Caco-2 (cell line): ENCODE measurements at regions of chr11 and their contacts with region 1.

Region 1: DNA sequence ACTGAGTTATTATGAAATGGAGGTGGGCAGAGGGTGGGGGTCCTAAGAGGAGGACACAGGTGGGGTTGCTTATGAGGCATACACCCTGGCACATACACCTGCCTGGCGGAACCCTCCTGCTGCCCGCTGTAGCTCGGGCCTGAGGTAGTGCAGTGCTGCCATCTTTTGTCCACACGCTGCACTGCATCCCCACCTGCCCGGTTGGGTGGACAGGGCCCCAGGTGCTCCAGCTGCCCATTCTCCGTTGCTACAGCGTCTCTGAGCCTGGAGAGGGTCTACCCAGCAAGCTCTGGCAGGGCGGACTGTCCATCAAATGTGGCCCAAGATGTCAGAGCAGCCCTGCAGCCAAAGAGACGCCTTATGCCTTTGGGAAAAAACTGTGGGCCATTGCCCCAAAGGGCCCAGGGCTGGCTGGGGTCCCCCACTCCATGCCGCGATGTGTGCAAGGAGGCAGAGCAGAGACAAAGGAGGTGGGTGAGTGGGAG is 131.2 kb downstream of the BUD13 start:
- DNase-seq: peak; percentile 77 to 88
- H3K4me3 ChIP-seq: no peak overlapping the region
- H3K4me3 Mint-ChIP-seq: no peak overlapping the region
- H3K27ac Mint-ChIP-seq: no peak overlapping the region
- H3K4me1 ChIP-seq: no peaks in the 10 kb centered on the region
- H3K4me1 Mint-ChIP-seq: no peaks in the 10 kb centered on the region
- H3K27me3 ChIP-seq: no peaks in the 10 kb centered on the region
- H3K27me3 Mint-ChIP-seq: peaks cover 6% of the 10 kb centered on the region
- CTCF ChIP-seq: peak; percentile 97 to 98

Region 2: DNA sequence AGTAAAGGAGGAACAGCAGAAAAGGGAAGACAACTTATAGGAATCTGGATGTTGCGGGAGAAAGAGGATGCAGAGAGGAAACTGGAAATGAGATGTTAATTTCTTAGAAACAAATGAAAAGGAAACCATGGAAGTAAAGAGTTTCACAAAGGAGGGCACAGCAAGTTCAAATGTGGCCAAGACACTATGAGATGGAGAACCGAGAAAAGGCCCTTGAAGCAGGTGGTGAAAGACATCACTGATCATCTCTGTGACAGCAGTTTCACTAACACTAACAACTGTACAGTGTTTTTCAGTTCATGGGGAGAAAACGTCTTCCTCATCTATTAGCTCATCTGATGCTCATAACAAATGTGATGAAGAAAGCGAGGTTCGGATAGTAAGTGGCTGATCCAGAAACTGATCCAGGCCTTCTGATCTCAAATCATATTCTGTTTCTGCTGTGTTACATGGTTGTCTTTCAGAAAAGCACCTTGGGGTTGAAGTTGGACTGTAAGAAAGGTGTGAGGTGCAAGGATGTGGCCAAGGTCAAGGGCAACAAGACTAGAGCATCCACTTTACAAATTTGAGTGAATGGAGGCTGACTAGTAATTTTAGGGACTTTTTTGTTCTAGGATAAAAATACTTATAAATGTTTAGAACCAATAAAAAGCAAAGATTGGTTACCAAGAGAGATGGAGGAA is 645.3 kb before region 1 on chr11:
- CTCF ChIA-PET with region 1: no interaction called
- POLR2A ChIA-PET with region 1: no interaction called
- intact Hi-C with region 1: no loop called
- DNase-seq: no peak
- H3K4me3 ChIP-seq: no peak overlapping the region
- H3K4me3 Mint-ChIP-seq: no peak overlapping the region
- H3K27ac Mint-ChIP-seq: no peak overlapping the region
- H3K4me1 ChIP-seq: no peaks in the 10 kb centered on the region
- H3K4me1 Mint-ChIP-seq: no peaks in the 10 kb centered on the region
- H3K27me3 ChIP-seq: no peaks in the 10 kb centered on the region
- H3K27me3 Mint-ChIP-seq: peaks cover 30% of the 10 kb centered on the region
- CTCF ChIP-seq: no peak

Region 3: DNA sequence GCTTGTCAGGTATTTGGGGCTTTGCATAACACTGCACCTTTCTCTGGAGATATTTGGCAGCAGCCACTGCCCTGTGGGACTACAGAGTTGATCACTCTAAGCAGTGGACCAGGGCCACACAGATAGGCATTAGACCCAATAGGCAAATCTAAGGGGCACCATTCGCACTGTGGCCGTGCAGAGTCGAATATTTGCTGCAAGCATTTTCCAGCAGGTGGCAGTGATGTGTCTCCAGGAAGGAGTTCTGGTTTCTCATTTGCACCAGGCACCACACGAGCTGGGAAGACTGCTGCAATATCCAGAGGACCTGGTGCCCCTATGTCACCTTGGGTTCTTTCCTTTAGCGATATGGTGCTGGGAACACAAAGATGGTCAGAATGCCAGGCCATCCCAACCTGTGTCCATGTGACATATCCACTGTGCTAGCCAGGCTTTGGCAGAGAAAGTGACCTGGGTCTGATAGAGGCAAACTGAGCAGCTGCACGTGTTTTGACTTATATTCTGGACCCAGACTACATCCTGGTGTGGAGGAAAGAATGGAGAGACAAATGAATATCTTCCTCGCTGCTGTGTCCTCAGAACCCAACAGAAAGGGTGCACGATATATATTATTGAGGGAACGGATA is 187.5 kb before region 1 on chr11:
- CTCF ChIA-PET with region 1: interaction called, 8 read pairs
- POLR2A ChIA-PET with region 1: no interaction called
- intact Hi-C with region 1: loop called (anchors 1 kb)
- DNase-seq: peak; percentile 61 to 69
- H3K4me3 ChIP-seq: no peak overlapping the region
- H3K4me3 Mint-ChIP-seq: no peak overlapping the region
- H3K27ac Mint-ChIP-seq: no peak overlapping the region
- H3K4me1 ChIP-seq: peaks cover 14% of the 10 kb centered on the region
- H3K4me1 Mint-ChIP-seq: peaks cover 14% of the 10 kb centered on the region
- H3K27me3 ChIP-seq: no peaks in the 10 kb centered on the region
- H3K27me3 Mint-ChIP-seq: no peaks in the 10 kb centered on the region
- CTCF ChIP-seq: peak; percentile 77 to 83

Region 4: GRCh38 chr11:116513894-116514293 is 127.7 kb before region 1 on chr11:
- CTCF ChIA-PET with region 1: interaction called, 16 read pairs
- POLR2A ChIA-PET with region 1: no interaction called
- intact Hi-C with region 1: loop called (anchors 1 kb)
- DNase-seq: peak; percentile 60 to 69
- H3K4me3 ChIP-seq: no peak overlapping the region
- H3K4me3 Mint-ChIP-seq: no peak overlapping the region
- H3K27ac Mint-ChIP-seq: no peak overlapping the region
- H3K4me1 ChIP-seq: no peaks in the 10 kb centered on the region
- H3K4me1 Mint-ChIP-seq: no peaks in the 10 kb centered on the region
- H3K27me3 ChIP-seq: no peaks in the 10 kb centered on the region; the same call in 1 of the 2 replicates
- H3K27me3 Mint-ChIP-seq: peaks cover 28% of the 10 kb centered on the region
- CTCF ChIP-seq: peak; percentile 51 to 64

Region 5: DNA sequence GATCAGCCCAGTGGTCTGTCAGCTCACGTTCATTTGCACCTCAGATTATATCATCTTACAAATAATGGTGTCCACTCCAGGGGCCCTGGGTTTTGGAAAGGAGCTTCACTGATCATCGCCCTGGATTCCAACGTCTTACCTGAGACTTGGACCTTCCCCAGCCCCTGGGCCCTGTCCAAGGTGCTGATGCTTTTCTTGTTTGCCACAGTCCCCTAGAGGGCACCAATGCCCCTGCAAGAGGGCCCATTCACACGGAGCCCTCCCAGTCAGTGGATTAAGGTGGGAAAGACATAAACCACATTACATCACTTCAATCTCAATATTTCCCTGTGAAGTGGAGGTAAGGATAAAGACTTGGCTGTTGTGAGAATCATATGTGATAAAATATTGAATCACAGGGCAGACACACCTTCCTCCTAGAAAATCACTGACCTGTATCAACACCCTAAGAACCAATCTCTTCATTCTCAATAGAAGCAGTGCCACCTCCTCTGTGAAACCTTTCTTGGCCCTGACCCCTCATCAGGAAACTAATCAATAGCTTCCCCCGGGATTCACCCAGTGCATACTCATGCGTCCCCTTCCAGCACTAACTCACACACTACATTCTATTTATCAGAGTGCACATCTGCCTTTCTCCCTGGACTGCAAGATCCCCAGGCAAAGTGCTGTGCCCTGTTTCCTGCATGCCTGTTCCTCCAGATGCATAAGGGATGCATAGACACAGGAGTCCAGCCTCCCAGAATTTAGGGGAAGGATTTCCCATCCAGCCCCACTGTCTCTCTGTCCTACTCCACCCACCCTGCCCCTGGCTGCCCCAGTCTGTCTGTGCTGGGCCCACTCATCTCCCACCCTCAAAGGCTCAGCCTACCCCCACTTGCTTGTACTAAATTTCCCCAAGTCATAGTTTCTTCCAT is 35.8 kb before region 1 on chr11:
- CTCF ChIA-PET with region 1: no interaction called
- POLR2A ChIA-PET with region 1: no interaction called
- intact Hi-C with region 1: loop called (anchors 1 kb)
- DNase-seq: peak; percentile 88 to 93
- H3K4me3 ChIP-seq: no peak overlapping the region
- H3K4me3 Mint-ChIP-seq: no peak overlapping the region
- H3K27ac Mint-ChIP-seq: no peak overlapping the region
- H3K4me1 ChIP-seq: peaks cover 8% of the 10 kb centered on the region; the same call in 1 of the 2 replicates
- H3K4me1 Mint-ChIP-seq: no peaks in the 10 kb centered on the region
- H3K27me3 ChIP-seq: 0 out of 2 replicates have a peak, but pooled peaks cover under 1% of the 10 kb centered on the region
- H3K27me3 Mint-ChIP-seq: peaks cover 7% of the 10 kb centered on the region
- CTCF ChIP-seq: peak; percentile 86 to 93

Region 6: GRCh38 chr11:116691771-116692177 is 50.2 kb after region 1 on chr11:
- CTCF ChIA-PET with region 1: interaction called, 8 read pairs
- POLR2A ChIA-PET with region 1: no interaction called
- intact Hi-C with region 1: loop called (anchors 1 kb)
- DNase-seq: peak; percentile 78 to 86
- H3K4me3 ChIP-seq: no peak overlapping the region
- H3K4me3 Mint-ChIP-seq: no peak overlapping the region
- H3K27ac Mint-ChIP-seq: no peak overlapping the region
- H3K4me1 ChIP-seq: peaks cover 47% of the 10 kb centered on the region
- H3K4me1 Mint-ChIP-seq: peaks cover 17% of the 10 kb centered on the region
- H3K27me3 ChIP-seq: no peaks in the 10 kb centered on the region
- H3K27me3 Mint-ChIP-seq: no peaks in the 10 kb centered on the region
- CTCF ChIP-seq: peak; percentile 98 to 100

Region 7: DNA sequence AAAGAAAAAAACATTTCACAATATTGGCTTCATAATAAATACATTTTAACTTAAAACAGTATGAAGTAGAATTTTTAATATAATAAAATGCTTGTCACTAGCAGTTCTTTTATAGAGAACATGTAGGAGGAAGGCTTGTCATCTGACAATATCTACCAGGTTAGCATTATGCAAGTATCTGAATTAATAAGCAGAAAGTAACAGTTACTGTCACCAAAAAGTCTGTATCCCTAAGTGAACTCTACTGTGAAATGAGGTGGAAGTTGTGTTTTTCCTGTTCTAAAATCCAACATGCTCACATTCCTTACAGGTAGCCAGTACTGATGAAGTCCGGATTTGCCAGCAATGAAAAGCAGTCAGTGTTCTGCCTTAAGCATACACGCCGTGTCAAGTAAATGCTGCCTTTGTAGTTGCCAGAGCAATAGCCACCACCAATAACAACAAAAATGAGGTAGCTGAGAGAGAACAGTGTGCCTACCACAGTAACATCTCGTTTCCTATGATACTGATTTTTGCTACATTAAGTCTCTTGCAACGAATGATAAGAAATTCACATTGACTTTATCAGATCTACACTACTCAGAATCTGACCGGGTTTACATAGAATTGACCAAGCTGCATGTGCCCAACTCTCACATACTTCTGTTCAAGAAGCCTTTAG is 361.2 kb after region 1 on chr11:
- CTCF ChIA-PET with region 1: no interaction called
- POLR2A ChIA-PET with region 1: no interaction called
- intact Hi-C with region 1: no loop called
- DNase-seq: no peak
- H3K4me3 ChIP-seq: no peak overlapping the region
- H3K4me3 Mint-ChIP-seq: no peak overlapping the region
- H3K27ac Mint-ChIP-seq: peak overlapping the region; percentile 27
- H3K4me1 ChIP-seq: peaks cover 20% of the 10 kb centered on the region
- H3K4me1 Mint-ChIP-seq: peaks cover 31% of the 10 kb centered on the region
- H3K27me3 ChIP-seq: no peaks in the 10 kb centered on the region
- H3K27me3 Mint-ChIP-seq: no peaks in the 10 kb centered on the region
- CTCF ChIP-seq: no peak